ENCODE measurements at regions of chr11 and their contacts with region 1.

Region 1: DNA sequence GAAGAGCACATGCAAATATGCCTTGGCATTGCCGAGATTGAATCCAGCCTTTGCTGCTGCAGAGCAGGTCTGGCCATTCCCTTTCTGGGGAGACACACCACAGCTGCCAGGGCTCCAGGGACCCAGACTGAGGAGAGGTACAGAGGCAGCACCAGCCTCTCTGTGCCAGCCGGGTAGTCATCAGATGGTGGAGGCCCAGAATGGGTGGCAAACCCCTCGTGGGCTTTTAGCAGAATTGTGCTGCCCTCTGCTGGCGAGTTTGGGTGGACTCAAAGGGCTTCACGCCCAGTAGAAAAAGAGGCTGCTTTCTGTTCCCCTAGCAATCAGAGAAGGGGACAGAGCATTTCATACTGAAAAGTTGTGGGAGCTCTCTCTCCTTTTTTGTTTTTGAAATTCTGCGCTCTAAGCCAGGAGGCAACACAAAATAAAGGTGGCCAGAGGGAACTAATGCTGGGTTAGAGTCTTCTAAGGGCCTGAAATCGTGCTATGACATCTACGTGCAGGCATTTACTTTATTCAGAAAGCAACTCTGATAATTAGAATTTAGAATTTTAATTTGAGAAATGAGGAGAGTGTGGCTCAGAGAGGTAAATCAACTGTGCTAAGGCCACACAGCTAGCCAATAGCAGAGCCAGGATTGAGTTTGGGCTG is 158.8 kb upstream of the NAV2 start:
- DNase-seq: peak; percentile 85
- H3K4me3 Mint-ChIP-seq: no peak overlapping the region
- H3K27ac Mint-ChIP-seq: no peak overlapping the region
- H3K4me1 Mint-ChIP-seq: no peaks in the 10 kb centered on the region
- H3K27me3 Mint-ChIP-seq: peaks cover 52% of the 10 kb centered on the region
- CTCF ChIP-seq: peak; percentile 88

Region 2: GRCh38 chr11:19087658-19088057 is 466.1 kb before region 1 on chr11:
- CTCF ChIA-PET with region 1: interaction called, 10 read pairs
- POLR2A ChIA-PET with region 1: no interaction called
- intact Hi-C with region 1: no loop called
- DNase-seq: peak; percentile 53
- H3K4me3 Mint-ChIP-seq: no peak overlapping the region
- H3K27ac Mint-ChIP-seq: no peak overlapping the region
- H3K4me1 Mint-ChIP-seq: no peaks in the 10 kb centered on the region
- H3K27me3 Mint-ChIP-seq: peaks cover 51% of the 10 kb centered on the region
- CTCF ChIP-seq: no peak

Region 3: DNA sequence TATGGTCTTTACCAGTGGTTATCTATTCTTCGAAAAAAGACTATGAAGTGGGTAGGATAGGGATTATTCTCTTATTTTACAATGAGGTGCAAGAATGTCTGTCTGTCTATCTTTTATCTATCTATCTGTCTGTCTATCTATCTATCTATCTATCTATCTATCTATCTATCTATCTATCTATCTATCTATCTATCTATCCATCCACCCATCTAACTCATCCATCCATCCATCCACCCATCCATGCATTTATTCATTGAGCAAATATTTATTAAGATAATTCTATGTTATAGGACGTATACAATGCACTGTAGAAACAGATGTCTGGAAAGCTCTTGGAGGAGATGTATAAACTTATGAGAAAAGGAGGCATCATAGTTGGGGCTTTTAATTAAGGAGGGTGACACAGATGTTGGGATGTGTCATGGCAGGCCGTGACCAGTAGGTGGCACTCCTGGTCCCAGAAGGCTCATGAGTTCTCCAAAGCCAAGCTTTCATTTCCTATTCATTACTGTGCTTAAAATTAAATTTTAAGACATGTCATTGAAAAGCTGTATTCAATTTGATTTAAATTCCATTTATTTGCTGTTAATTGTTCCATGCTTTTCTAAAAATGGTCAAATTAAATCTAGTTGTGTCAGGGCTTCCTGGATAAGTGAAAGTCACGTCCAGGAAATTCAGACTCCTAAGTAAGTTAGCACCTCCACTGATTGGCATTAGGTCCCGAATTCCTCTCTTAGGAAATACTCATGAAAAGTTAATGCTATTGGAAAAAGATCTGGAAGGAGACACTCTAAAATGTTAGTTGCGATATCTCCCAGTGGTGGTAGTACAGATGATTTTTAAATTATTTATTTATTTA is 294.1 kb before region 1 on chr11:
- CTCF ChIA-PET with region 1: interaction called, 245 read pairs
- POLR2A ChIA-PET with region 1: interaction called, 3 read pairs
- intact Hi-C with region 1: loop called (anchors 1 kb)
- DNase-seq: peak; percentile 65
- H3K4me3 Mint-ChIP-seq: peak overlapping the region; percentile 39
- H3K27ac Mint-ChIP-seq: no peak overlapping the region
- H3K4me1 Mint-ChIP-seq: no peaks in the 10 kb centered on the region
- H3K27me3 Mint-ChIP-seq: no peaks in the 10 kb centered on the region
- CTCF ChIP-seq: peak; percentile 94

Region 4: GRCh38 chr11:19311308-19312030 is 242.3 kb before region 1 on chr11:
- CTCF ChIA-PET with region 1: interaction called, 19 read pairs
- POLR2A ChIA-PET with region 1: no interaction called
- intact Hi-C with region 1: loop called (anchors 1 kb)
- DNase-seq: peak; percentile 71
- H3K4me3 Mint-ChIP-seq: no peak overlapping the region
- H3K27ac Mint-ChIP-seq: no peak overlapping the region
- H3K4me1 Mint-ChIP-seq: peaks cover 5% of the 10 kb centered on the region
- H3K27me3 Mint-ChIP-seq: no peaks in the 10 kb centered on the region
- CTCF ChIP-seq: peak; percentile 59

Region 5: DNA sequence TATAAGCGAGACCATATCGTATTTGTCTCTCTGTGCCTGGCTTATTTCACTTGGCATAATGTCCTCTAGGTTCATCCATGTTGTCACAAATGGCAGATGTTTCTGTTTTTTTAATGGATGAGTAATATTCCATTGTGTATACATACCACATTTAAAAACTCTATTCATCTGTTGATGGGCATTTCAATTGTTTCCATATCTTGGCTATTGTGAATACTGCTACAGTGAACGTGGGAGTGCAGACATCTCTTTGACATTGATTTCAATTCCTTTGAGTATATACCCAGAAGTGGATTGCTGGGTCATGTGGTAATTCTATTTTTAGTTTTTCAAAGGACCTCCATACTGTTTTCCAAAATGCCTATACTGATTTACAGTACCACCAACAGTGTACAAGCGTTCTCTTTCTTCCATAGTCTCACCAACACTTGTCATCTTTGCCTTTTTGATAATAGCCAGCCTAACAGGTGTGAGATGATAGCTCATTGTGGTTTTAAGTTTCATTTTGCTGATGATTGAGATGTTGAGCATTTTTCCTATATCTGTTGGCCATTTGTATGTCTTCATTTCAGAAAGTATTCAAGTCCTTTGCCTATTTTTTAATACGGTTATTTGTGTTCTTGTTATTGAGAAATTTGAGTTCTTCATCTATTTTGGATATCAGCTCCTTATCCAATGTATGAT is 118.4 kb before region 1 on chr11:
- CTCF ChIA-PET with region 1: no interaction called
- POLR2A ChIA-PET with region 1: no interaction called
- intact Hi-C with region 1: no loop called
- DNase-seq: no peak
- H3K4me3 Mint-ChIP-seq: no peak overlapping the region
- H3K27ac Mint-ChIP-seq: no peak overlapping the region
- H3K4me1 Mint-ChIP-seq: peaks cover 33% of the 10 kb centered on the region
- H3K27me3 Mint-ChIP-seq: peaks cover 14% of the 10 kb centered on the region
- CTCF ChIP-seq: no peak

Region 6: GRCh38 chr11:19539861-19540260 is 13.9 kb before region 1 on chr11:
- CTCF ChIA-PET with region 1: interaction called, 26 read pairs
- POLR2A ChIA-PET with region 1: no interaction called
- intact Hi-C with region 1: no loop called
- DNase-seq: no peak
- H3K4me3 Mint-ChIP-seq: no peak overlapping the region
- H3K27ac Mint-ChIP-seq: no peak overlapping the region
- H3K4me1 Mint-ChIP-seq: no peaks in the 10 kb centered on the region
- H3K27me3 Mint-ChIP-seq: peaks cover 91% of the 10 kb centered on the region
- CTCF ChIP-seq: no peak

Region 7: GRCh38 chr11:19808076-19808911 is 254.5 kb after region 1 on chr11:
- CTCF ChIA-PET with region 1: interaction called, 11 read pairs
- POLR2A ChIA-PET with region 1: no interaction called
- intact Hi-C with region 1: loop called (anchors 2 kb)
- DNase-seq: no peak
- H3K4me3 Mint-ChIP-seq: no peak overlapping the region
- H3K27ac Mint-ChIP-seq: peak overlapping the region; percentile 39
- H3K4me1 Mint-ChIP-seq: peaks cover 15% of the 10 kb centered on the region
- H3K27me3 Mint-ChIP-seq: no peaks in the 10 kb centered on the region
- CTCF ChIP-seq: no peak

Region 8: GRCh38 chr11:20489948-20490347 is 936.1 kb after region 1 on chr11:
- CTCF ChIA-PET with region 1: no interaction called
- POLR2A ChIA-PET with region 1: no interaction called
- intact Hi-C with region 1: no loop called
- DNase-seq: no peak
- H3K4me3 Mint-ChIP-seq: no peak overlapping the region
- H3K27ac Mint-ChIP-seq: no peak overlapping the region
- H3K4me1 Mint-ChIP-seq: no peaks in the 10 kb centered on the region
- H3K27me3 Mint-ChIP-seq: no peaks in the 10 kb centered on the region
- CTCF ChIP-seq: no peak

Measured in MCF 10A (cell line).